ENCODE measurements at regions of chr2 and their contacts with region 1.

Region 1: DNA sequence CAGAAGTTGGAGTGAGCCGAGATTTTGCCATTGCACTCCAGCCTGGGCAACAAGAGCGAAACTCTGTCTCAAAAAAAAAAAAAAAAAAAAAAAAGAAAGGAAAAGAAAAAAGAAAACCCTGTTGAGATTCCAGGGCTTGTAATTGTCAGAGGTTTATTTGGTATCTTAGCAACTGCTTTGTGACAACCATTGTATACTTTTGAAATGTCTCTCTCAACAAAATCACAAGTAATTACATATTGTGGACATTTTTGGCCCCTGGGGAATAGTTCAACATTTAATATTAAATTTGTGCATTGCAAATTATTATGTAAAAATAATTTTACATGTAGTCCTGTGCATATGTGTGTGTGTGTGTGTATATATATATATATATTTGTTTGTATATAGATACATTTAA is 270.8 kb downstream of the GALNT13 start:
- DNase-seq: no peak
- H3K4me3 ChIP-seq: no peak overlapping the region
- H3K27ac ChIP-seq: no peak overlapping the region
- H3K4me1 ChIP-seq: no peaks in the 10 kb centered on the region
- H3K27me3 ChIP-seq: no peaks in the 10 kb centered on the region
- CTCF ChIP-seq: no peak
- EP300 ChIP-seq: no peak
- POLR2A ChIP-seq: no peak

Region 2: GRCh38 chr2:154097833-154098398 is 44.6 kb before region 1 on chr2:
- intact Hi-C with region 1: no loop called
- DNase-seq: no peak
- H3K4me3 ChIP-seq: no peak overlapping the region
- H3K27ac ChIP-seq: no peak overlapping the region
- H3K4me1 ChIP-seq: no peaks in the 10 kb centered on the region
- H3K27me3 ChIP-seq: no peaks in the 10 kb centered on the region
- CTCF ChIP-seq: no peak
- EP300 ChIP-seq: no peak
- POLR2A ChIP-seq: no peak

Region 3: DNA sequence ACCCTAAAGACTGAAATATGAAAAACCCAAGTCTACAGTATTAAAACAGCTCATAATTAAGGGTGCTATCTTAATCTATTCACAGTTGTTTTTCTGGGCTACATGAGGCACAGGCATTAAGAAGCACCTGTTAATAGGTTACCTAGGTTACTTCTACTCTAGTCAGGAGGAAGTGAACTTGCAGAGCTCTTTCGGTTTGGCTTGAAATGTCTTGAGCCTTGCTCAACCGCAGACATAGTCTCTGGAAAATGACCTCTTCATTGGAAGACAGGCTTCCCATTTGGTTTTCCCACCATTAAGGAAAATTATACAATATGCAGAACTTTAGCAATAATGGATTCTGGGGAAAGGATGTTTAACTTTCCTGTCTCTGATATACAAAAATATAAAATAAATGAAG is 413.7 kb after region 1 on chr2:
- intact Hi-C with region 1: loop called in 1 of 4 experiments (anchors 5 kb)
- DNase-seq: no peak
- H3K4me3 ChIP-seq: no peak overlapping the region
- H3K27ac ChIP-seq: no peak overlapping the region
- H3K4me1 ChIP-seq: no peaks in the 10 kb centered on the region
- H3K27me3 ChIP-seq: no peaks in the 10 kb centered on the region
- CTCF ChIP-seq: no peak
- EP300 ChIP-seq: no peak
- POLR2A ChIP-seq: no peak

Measured in ovary (tissue), 10 donors.